ENCODE measurements at regions of chr1 and their contacts with region 1.

Region 1: GRCh38 chr1:101520302-101520701 is 283.5 kb downstream of the S1PR1 start:
- DNase-seq: no peak
- H3K4me3 ChIP-seq: no peak overlapping the region
- H3K27ac ChIP-seq: no peak overlapping the region
- H3K27me3 ChIP-seq: no peaks in the 10 kb centered on the region
- CTCF ChIP-seq: peak; percentile 77

Region 2: GRCh38 chr1:101238681-101239094 is 281.6 kb before region 1 on chr1:
- CTCF ChIA-PET with region 1: no interaction called
- POLR2A ChIA-PET with region 1: no interaction called
- DNase-seq: peak; percentile 72
- H3K4me3 ChIP-seq: peak overlapping the region; percentile 80
- H3K27ac ChIP-seq: no peak overlapping the region
- H3K27me3 ChIP-seq: no peaks in the 10 kb centered on the region
- CTCF ChIP-seq: peak; percentile 96

Region 3: DNA sequence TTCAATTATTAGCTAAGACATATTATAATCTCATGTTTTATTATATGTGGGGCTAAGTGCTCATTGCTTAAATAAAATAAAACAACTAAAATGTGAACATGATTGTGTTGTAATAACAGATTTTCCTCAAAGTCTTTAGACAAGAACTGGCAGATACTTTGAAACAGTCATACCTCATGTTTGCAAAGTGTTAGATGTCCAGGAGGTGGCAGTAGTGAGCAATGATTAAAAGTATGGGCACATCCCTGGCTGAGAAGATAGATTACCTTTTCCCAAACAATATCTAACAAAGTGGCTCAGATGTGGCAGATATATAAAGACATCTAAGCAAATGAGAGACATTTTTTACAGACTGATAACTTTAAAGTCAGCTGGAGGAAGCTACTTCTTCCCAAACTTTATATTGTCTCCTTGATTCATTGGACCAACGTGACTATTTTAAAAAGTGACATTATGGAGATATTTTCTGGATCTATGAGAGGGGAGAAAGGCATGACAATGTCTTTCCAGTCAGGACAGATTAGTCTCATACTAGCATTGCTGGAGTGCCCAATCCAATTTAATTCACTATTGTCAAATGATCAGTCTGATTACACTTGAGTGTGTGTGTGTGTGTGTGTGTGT is 13.6 kb before region 1 on chr1:
- CTCF ChIA-PET with region 1: interaction called, 31 read pairs
- POLR2A ChIA-PET with region 1: no interaction called
- DNase-seq: no peak
- H3K4me3 ChIP-seq: no peak overlapping the region
- H3K27ac ChIP-seq: no peak overlapping the region
- H3K27me3 ChIP-seq: no peaks in the 10 kb centered on the region
- CTCF ChIP-seq: peak; percentile 79

Region 4: DNA sequence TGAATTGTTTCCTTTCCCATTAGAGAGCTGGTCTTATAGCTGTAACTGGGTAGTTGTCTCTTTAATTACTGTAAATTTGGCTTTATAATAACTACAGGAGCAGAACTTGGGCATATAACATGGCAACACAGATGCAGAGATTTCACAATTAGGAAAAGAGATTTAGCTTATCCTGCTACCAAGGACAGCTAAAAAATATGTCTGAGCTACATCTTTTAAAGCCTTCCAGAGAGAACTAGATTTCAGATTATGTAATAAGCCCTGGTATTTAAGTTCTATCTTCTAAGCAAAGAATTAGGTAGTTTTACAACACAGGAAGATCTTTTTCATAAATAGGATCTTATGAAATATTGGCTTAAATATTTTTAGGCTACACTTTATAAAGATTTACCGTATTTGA is 30.3 kb after region 1 on chr1:
- CTCF ChIA-PET with region 1: interaction called, 10 read pairs
- POLR2A ChIA-PET with region 1: no interaction called
- DNase-seq: no peak
- H3K4me3 ChIP-seq: no peak overlapping the region
- H3K27ac ChIP-seq: no peak overlapping the region
- H3K27me3 ChIP-seq: no peaks in the 10 kb centered on the region
- CTCF ChIP-seq: no peak

Region 5: GRCh38 chr1:101567582-101568189 is 47.4 kb after region 1 on chr1:
- CTCF ChIA-PET with region 1: interaction called, 31 read pairs
- POLR2A ChIA-PET with region 1: no interaction called
- DNase-seq: no peak
- H3K4me3 ChIP-seq: no peak overlapping the region
- H3K27ac ChIP-seq: no peak overlapping the region
- H3K27me3 ChIP-seq: no peaks in the 10 kb centered on the region
- CTCF ChIP-seq: peak; percentile 98

Region 6: DNA sequence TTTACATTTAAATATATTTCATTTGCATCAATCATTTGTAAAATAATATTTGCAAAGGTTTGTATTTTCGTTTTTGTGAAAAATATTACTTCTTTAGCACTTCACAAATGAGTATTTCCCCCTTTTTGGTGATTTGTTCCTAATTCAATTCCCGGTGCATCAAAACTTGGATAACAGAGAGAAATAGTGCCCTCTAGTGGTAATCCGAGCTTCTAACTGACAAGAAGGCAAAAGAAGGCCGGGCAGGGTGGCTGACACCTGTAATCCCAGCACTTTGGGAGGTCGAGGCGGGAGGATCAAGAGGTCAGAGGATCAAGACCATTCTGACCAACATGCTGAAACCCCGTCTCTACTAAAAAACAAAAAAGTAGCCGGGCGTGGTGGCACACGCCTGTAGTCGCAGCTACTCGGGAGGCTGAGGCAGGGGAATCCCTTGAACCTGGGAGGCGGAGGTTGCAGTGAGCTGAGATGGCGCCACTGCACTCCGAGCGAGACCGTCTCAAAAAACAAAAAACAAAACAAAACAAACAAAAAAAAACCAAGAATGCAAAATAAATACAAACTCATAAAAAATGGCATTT is 1450.3 kb after region 1 on chr1:
- CTCF ChIA-PET with region 1: interaction called, 10 read pairs
- POLR2A ChIA-PET with region 1: no interaction called
- DNase-seq: peak; percentile 39
- H3K4me3 ChIP-seq: no peak overlapping the region
- H3K27ac ChIP-seq: no peak overlapping the region
- H3K27me3 ChIP-seq: no peaks in the 10 kb centered on the region
- CTCF ChIP-seq: peak; percentile 78

Region 7: DNA sequence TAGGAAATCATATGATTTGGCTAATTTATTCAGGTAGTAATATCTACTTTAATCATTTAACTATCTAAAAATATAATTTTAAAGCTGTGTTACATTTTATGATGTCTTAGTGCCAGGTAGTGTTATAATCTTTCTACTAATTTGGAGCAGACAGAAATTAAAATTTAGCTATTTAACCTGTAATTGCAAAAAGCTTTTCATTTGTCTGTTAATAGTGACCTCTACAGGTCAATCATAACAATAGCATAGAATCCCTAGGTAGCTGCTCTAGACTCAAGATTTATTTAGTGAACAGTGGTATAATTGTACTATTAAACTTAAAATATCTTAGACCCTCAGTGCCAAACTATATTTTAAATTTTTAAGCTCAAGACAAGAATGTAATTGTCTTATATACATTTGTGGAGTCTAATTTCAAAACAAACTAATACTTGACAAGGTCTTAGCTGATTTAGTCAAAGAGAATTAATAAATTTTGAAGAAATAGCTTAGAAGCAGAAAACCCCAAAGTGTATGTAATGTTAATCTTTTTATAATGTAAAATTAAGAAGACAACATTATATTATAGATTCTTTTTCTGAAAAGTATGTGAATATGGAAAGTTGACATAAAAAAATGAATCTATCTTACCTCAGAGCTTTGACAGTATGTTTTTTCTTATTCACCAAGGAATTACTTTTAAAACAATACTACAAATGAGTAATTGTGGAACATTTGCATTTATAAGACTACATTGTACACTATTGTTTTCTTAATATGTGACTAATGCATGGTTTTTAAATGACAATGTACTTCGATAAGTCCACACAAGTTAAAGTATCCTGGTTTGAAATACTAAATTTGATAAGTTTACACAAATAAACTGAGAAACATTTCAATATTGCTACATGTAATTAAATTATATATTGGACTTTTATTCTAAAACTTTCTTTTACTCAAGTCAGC is 1941.1 kb after region 1 on chr1:
- CTCF ChIA-PET with region 1: interaction called, 12 read pairs
- POLR2A ChIA-PET with region 1: no interaction called
- DNase-seq: no peak
- H3K4me3 ChIP-seq: no peak overlapping the region
- H3K27ac ChIP-seq: no peak overlapping the region
- H3K27me3 ChIP-seq: no peaks in the 10 kb centered on the region
- CTCF ChIP-seq: peak; percentile 59